ENCODE measurements at regions of chr3 and their contacts with region 1.

Region 1: GRCh38 chr3:171768281-171768900 is 41.9 kb downstream of the PLD1 start:
- DNase-seq: no peak
- H3K4me3 ChIP-seq: no peak overlapping the region
- CTCF ChIP-seq: no peak
- POLR2A ChIP-seq: no peak

Region 2: DNA sequence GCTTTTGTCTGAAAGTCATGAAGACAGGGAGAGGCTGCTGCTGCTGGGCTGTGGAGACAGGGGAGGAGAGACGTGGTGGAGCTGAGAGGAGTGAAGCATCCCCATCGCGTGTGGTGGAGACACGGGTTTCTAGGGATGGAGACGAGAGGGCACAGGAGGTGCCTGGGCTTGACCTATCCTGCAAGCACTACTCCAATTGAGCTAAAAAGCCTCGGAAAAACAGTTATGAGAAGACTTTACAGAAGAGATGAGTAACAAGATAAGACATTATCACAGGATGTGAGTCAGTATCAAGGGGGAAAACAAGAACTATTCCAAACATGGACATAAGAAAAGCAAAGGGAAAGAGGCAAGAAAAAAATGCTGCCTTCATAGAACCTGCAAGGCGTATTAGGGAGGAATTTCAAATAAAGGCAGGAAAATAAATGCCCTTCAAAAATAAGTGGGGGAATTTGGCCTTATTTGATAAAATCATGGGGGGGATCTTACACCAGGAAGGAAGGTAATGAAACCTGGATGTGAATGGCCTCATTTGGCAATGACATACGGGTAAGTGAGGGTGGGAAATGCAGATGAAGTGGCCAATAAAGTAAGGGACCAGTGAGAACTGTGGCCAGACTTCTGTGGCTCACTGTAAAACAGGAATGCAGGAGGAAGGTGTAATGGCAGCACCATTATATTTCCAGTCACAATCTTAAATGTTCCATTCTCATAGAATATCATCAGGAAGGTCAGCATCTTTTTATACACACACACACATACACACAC is 56.0 kb before region 1 on chr3:
- intact Hi-C with region 1: loop called (anchors 10 kb)
- DNase-seq: no peak
- H3K4me3 ChIP-seq: no peak overlapping the region
- CTCF ChIP-seq: no peak
- POLR2A ChIP-seq: no peak

Region 3: GRCh38 chr3:172054115-172054764 is 285.8 kb after region 1 on chr3:
- intact Hi-C with region 1: no loop called
- DNase-seq: no peak
- H3K4me3 ChIP-seq: no peak overlapping the region
- CTCF ChIP-seq: no peak
- POLR2A ChIP-seq: no peak